ENCODE measurements at regions of chr10 and their contacts with region 1.

Region 1: GRCh38 chr10:21061982-21062381 is 164.9 kb upstream of the NEBL start:
- DNase-seq: no peak
- H3K4me3 ChIP-seq: no peak overlapping the region
- H3K27ac ChIP-seq: no peak overlapping the region
- H3K4me1 ChIP-seq: peaks cover 0 to 4% of the 10 kb centered on the region in 2 donors
- H3K27me3 ChIP-seq: no peaks in the 10 kb centered on the region
- CTCF ChIP-seq: no peak
- POLR2A ChIP-seq: no peak

Region 2: DNA sequence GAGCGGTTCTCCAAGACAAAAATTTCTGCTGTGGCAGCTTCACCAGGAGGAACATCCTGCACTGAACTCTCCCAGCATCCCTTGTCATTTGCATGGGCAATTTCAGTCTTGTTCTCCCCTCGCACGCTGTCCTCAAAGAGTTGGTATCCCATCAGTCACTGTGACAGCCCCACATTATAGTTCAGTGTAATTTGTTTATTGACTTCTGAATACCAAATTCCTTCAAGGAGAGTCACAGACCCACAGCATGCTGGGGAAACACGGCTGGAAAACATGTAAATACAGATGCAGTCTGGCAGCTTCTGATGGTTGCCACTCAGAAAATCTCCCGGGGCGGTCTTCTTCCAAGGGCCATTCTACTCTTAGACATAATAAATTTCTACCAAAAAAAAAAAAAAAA is 13.9 kb before region 1 on chr10:
- intact Hi-C with region 1: loop called (anchors 2 kb)
- DNase-seq: no peak
- H3K4me3 ChIP-seq: no peak overlapping the region
- H3K27ac ChIP-seq: no peak overlapping the region
- H3K4me1 ChIP-seq: peaks cover 25 to 27% of the 10 kb centered on the region in 2 donors
- H3K27me3 ChIP-seq: no peaks in the 10 kb centered on the region
- CTCF ChIP-seq: no peak
- POLR2A ChIP-seq: no peak

Region 3: GRCh38 chr10:21364196-21365114 is 302.5 kb after region 1 on chr10:
- intact Hi-C with region 1: no loop called
- DNase-seq: no peak
- H3K4me3 ChIP-seq: no peak overlapping the region
- H3K27ac ChIP-seq: peak overlapping the region in 2 of 3 donors; percentile 44 to 62
- H3K4me1 ChIP-seq: peaks cover 0 to 7% of the 10 kb centered on the region in 2 donors
- H3K27me3 ChIP-seq: no peaks in the 10 kb centered on the region
- CTCF ChIP-seq: no peak
- POLR2A ChIP-seq: no peak